ENCODE measurements at regions of chr13 and their contacts with region 1.

Region 1: GRCh38 chr13:21476893-21477472 is 17.9 kb upstream of the ZDHHC20 start:
- DNase-seq: peak; percentile 85
- ATAC-seq: peak; percentile 68
- H3K4me3 ChIP-seq: peak overlapping the region; percentile 58
- H3K27ac ChIP-seq: no peak overlapping the region
- H3K4me1 ChIP-seq: peaks cover 6% of the 10 kb centered on the region
- H3K27me3 ChIP-seq: no peaks in the 10 kb centered on the region
- CTCF ChIP-seq: peak; percentile 86

Region 2: GRCh38 chr13:21297914-21298831 is 178.8 kb before region 1 on chr13:
- CTCF ChIA-PET with region 1: interaction called, 21 read pairs
- POLR2A ChIA-PET with region 1: no interaction called
- intact Hi-C with region 1: loop called (anchors 1 kb)
- DNase-seq: peak; percentile 87
- ATAC-seq: peak; percentile 88
- H3K4me3 ChIP-seq: peak overlapping the region; percentile 86
- H3K27ac ChIP-seq: peak overlapping the region; percentile 44
- H3K4me1 ChIP-seq: peaks cover 14% of the 10 kb centered on the region
- H3K27me3 ChIP-seq: no peaks in the 10 kb centered on the region
- CTCF ChIP-seq: peak; percentile 64

Region 3: DNA sequence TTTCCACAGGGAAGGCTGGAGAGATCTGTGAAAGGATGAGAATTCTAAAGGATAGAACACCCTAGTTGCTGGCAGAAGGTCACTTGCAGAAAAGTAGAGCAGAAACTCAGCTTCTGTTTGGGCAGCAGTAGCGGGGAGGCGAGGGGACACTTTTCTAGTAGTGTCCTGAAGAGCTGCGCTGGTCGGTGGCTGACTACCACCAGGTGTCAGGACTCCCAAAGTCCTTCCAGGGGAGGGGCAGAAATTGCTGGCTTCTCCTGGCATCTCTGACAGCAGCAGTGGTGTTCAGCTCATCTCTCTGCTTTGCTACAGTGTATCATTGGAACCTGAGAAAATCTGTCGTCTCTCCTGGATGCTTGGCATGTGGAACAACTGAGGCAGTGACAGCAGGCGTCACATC is 138.8 kb before region 1 on chr13:
- CTCF ChIA-PET with region 1: interaction called, 10 read pairs
- POLR2A ChIA-PET with region 1: no interaction called
- intact Hi-C with region 1: loop called (anchors 1 kb)
- DNase-seq: peak; percentile 14
- ATAC-seq: peak; percentile 53
- H3K4me3 ChIP-seq: no peak overlapping the region
- H3K27ac ChIP-seq: no peak overlapping the region
- H3K4me1 ChIP-seq: no peaks in the 10 kb centered on the region
- H3K27me3 ChIP-seq: no peaks in the 10 kb centered on the region
- CTCF ChIP-seq: no peak; the same call in 1 of the 2 replicates

Region 4: DNA sequence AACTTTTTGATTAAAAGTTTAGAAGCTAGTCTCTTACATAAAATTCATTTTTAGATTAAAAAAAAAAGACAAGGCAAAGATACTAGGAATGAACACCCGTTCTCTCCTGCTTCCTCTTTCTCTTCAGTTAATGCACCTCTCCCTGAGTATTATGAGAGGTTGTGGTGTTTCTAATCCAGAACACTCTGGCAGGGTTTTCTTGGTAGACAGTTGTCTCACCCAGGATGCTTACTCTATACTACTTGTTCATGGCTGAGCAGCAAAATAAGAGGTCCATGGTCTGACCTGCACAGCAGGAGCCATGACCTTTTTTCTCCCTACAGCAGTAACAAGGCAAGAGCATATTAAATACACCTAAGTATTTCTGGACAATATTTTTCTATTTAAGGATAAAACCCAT is 65.0 kb after region 1 on chr13:
- CTCF ChIA-PET with region 1: no interaction called
- POLR2A ChIA-PET with region 1: no interaction called
- intact Hi-C with region 1: loop called (anchors 5 kb)
- DNase-seq: no peak
- ATAC-seq: peak; percentile 14; the same call in 1 of the 2 replicates
- H3K4me3 ChIP-seq: no peak overlapping the region
- H3K27ac ChIP-seq: peak overlapping the region; percentile 39; the same call in 1 of the 2 replicates
- H3K4me1 ChIP-seq: peaks cover 46% of the 10 kb centered on the region
- H3K27me3 ChIP-seq: no peaks in the 10 kb centered on the region
- CTCF ChIP-seq: no peak

Region 5: DNA sequence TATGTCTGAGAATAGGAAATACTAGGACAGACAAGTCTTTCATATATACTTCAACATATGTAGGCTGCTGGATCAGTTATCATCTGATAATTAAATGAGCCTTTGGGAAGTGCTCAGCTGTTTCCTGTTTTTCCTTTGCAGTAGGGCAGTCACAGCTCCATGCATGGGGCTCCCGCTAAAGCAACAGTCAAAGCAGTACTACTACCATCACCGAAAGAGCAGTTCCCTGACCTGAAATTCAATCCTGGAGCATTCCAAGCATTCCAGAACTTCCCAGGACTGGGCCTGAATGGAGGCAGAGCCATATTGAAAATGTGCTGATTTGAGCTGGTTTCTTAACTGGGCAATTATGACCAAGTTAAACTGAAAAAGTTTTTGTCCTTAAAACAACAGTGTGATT is 106.5 kb after region 1 on chr13:
- CTCF ChIA-PET with region 1: no interaction called
- POLR2A ChIA-PET with region 1: no interaction called
- intact Hi-C with region 1: loop called (anchors 1 kb)
- DNase-seq: no peak
- ATAC-seq: no peak
- H3K4me3 ChIP-seq: no peak overlapping the region
- H3K27ac ChIP-seq: no peak overlapping the region
- H3K4me1 ChIP-seq: peaks cover 7% of the 10 kb centered on the region
- H3K27me3 ChIP-seq: no peaks in the 10 kb centered on the region
- CTCF ChIP-seq: no peak

Region 6: DNA sequence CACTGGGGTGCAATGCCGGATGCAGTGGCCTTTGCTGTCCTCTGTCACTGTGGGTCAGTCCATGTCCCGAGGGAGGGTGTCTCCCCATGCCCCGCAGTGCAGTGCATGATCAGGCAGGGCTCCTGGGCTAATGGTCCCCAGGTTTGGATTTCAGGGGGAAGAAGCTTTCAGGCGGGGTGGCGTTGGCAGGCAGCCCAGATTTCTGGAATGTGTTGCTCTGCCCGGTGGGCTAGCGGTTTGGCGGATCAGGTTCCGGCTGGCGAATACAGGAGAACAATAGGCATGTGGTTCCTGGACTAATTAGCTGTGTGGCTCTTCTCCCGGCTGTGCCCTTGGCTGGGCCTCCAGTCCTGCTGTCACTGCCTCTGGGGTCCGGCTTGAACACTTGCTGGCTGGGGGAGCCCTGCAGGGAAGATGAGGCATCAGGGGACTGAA is 335.2 kb after region 1 on chr13:
- CTCF ChIA-PET with region 1: no interaction called
- POLR2A ChIA-PET with region 1: no interaction called
- intact Hi-C with region 1: no loop called
- DNase-seq: no peak
- ATAC-seq: no peak
- H3K4me3 ChIP-seq: no peak overlapping the region
- H3K27ac ChIP-seq: no peak overlapping the region
- H3K4me1 ChIP-seq: no peaks in the 10 kb centered on the region
- H3K27me3 ChIP-seq: peaks cover 31% of the 10 kb centered on the region
- CTCF ChIP-seq: no peak

Measured in PC-3 (cell line).